GM10248 (cell line): ENCODE measurements at regions of chr17 and their contacts with region 1.

Region 1: DNA sequence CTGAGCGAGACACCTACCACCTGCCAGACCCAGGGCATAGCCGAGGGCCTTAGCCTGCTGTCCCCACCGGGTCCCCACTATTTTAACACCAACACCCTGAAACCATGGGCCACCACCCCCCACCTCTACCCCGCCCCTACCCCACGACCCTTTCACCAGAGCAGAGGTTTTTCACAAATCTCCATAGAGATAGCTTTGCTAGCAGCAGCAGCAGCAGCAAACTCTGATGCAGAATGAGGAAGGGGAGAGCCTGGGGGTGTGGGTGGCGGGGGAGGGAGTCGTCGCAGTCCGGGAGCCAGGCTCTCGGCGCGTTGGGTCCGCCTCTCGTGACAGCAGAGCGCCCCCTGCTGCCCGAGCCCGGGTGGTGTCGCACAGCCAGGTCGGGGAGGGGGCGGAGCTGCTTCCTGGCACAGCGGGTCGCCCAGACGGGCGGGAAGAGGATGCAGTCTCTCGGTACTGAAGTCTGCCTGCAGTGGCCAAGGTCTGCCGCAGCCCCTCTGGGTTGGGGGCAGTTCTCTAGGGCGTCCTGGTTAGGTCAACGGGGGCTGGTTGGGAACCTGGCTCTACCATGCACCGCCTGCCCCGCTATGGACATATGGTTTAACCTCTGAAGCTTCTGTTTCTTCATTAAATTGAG is 38.1 kb upstream of the CCDC182 start:
- DNase-seq: peak; percentile 86
- CTCF ChIP-seq: peak; percentile 79

Region 2: DNA sequence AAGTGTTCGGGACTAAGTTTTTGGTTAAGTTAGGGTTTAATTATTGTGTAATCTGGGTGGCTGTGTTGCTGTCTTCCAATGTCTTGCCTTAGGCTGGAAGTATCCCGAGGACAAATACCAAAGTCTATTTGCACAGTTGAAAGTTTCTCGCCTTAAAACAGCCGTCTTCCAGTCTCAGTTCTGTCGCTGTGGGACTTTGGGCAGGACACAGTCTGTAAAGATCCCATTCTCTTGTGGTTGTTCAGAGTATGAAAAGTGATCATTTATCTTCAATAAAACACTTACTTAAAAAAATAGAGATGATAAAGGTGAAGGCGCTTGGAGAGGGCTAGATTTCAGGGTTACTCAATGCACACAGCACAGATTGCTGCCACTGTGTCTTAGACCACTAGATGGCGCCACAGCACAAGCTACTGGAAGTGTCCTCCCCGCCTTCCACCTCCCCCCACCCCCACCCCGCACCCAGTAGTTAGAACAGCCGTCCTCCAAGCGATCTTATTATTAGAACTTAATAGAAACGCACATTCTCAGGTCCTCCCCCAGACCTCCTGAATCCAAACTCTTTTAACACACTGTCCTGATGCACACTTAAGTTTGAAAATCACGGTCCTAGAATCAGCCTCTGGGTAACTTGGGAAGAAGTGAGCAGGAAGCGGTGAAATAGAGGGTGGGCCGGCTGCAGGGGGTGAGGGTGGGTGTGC is 652.3 kb before region 1 on chr17:
- CTCF ChIA-PET with region 1: interaction called, 13 read pairs
- POLR2A ChIA-PET with region 1: no interaction called
- DNase-seq: peak; percentile 90
- CTCF ChIP-seq: peak; percentile 85

Region 3: GRCh38 chr17:57761887-57762286 is 21.3 kb before region 1 on chr17:
- CTCF ChIA-PET with region 1: interaction called, 18 read pairs
- POLR2A ChIA-PET with region 1: no interaction called
- DNase-seq: no peak
- CTCF ChIP-seq: no peak

Region 4: GRCh38 chr17:57772774-57773173 is 10.4 kb before region 1 on chr17:
- CTCF ChIA-PET with region 1: interaction called, 24 read pairs
- POLR2A ChIA-PET with region 1: no interaction called
- DNase-seq: no peak
- CTCF ChIP-seq: no peak

Region 5: GRCh38 chr17:57803025-57803424 is 19.8 kb after region 1 on chr17:
- CTCF ChIA-PET with region 1: interaction called, 12 read pairs
- POLR2A ChIA-PET with region 1: no interaction called
- DNase-seq: no peak
- CTCF ChIP-seq: no peak

Region 6: GRCh38 chr17:57833179-57833939 is 50.1 kb after region 1 on chr17:
- CTCF ChIA-PET with region 1: interaction called, 19 read pairs
- POLR2A ChIA-PET with region 1: no interaction called
- DNase-seq: peak; percentile 69
- CTCF ChIP-seq: peak; percentile 90

Region 7: GRCh38 chr17:58112970-58113631 is 329.9 kb after region 1 on chr17:
- CTCF ChIA-PET with region 1: interaction called, 10 read pairs
- POLR2A ChIA-PET with region 1: no interaction called
- DNase-seq: peak; percentile 76
- CTCF ChIP-seq: peak; percentile 95